ENCODE measurements at regions of chr1 and their contacts with region 1.

Region 1: DNA sequence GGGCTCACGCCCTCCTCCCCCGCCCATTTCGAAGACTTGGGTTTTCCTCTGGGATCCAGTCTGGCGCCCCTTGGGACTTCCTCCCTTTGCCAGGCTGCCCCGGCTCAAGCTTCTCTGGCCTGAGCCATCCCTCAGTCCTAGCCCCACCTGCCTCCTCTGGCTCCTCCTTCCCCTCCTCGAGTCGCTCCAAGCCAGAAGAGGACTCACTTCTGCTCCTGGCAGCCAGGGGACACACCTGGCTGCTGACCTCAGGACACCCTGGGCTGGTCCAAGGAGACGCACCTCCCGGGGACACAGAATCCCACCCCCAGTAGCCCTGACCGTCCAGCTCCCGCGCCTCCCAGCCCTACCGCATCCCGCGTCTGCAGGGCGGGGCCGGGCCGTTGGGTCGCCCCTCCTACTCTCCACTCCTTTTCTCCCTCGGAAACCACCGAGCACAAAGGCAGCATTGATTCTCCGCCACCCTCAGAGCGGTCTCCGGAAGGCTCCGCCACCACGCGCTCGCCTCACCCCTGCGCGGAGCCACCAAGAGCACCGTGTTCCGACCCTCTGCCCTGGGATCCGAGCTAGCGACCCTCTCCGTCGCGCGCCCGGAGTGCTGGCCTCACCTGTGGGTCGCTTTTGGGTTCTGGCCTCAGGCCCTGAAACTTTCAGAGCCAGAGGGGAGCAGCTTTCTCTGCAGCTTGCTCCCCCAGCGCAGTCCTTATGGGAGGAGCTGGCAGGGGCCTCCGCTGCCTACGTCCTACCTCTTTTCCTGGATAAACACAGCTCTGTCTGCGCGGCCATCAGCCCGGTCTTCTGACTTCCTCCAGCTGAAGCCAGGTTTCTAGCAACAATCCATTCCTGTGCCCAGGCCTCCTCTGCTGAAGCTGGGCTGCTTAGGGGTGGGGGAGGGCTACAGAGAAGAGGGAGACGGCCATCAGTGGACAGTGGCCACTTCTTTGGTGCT is at the start of gene C2CD4D:
- DNase-seq: peak; percentile 42 to 77 (median 66)
- ATAC-seq: peak; percentile 89
- H3K4me3 ChIP-seq: peak within 1 kb of the TSS; percentile 68
- H3K4me3 Mint-ChIP-seq: peak within 1 kb of the TSS; percentile 68 to 89 (median 82)
- H3K27ac ChIP-seq: peak within 1 kb of the TSS; percentile 55
- H3K27ac Mint-ChIP-seq: peak within 1 kb of the TSS; percentile 31 to 87 (median 77)
- H3K4me1 ChIP-seq: peaks cover 27 to 38% of the 10 kb centered on the region in 2 donors
- H3K4me1 Mint-ChIP-seq: peaks cover 33 to 53% (median 40%) of the 10 kb centered on the region in 7 donors
- H3K27me3 ChIP-seq: no peaks in the 10 kb centered on the region
- H3K27me3 Mint-ChIP-seq: peaks cover 0 to 8% (median 0%) of the 10 kb centered on the region in 5 donors
- total RNA-seq, gene C2CD4D: 0.34 to 0.87 TPM in 2 of 5 experiments, not detected in the others

Region 2: DNA sequence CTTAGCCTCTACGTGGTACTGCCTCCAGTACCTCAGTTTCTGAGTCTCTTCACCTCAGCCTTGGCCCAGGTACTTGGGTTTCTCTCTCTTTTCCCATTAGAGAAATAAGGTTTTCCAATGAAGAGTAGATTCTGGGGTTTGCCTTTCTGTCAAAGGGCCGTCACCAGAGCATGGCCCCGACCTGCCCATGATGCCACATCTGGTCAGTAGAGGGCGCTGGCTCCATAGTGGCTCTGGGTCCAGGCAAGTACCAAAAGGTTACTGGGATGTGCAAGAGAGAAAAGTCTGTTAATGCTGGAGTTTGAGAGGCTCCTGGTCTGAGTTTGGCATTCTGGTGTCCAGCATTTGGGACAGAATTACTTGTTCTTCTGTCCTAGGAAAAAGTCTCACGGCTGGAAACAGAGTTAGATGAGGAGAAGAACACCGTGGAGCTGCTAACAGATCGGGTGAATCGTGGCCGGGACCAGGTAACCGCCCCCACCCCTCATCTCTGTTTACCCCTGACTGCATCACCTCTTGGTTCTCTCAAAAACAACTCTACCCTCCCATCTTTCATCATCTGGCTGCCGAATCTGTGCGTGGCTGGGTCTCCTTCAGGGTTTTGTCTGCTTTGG is 305.0 kb before region 1 on chr1:
- CTCF ChIA-PET with region 1: no interaction called
- POLR2A ChIA-PET with region 1: no interaction called
- intact Hi-C with region 1: loop called in 1 of 2 experiments (anchors 2 kb)
- DNase-seq: peak; percentile 28 to 78 (median 59)
- ATAC-seq: peak; percentile 88
- H3K4me3 ChIP-seq: no peak overlapping the region
- H3K4me3 Mint-ChIP-seq: no peak overlapping the region
- H3K27ac ChIP-seq: no peak overlapping the region
- H3K27ac Mint-ChIP-seq: peak overlapping the region in 1 of 9 donors; percentile 67
- H3K4me1 ChIP-seq: peaks cover 6% of the 10 kb centered on the region in 2 donors
- H3K4me1 Mint-ChIP-seq: peaks cover 0 to 8% (median 3%) of the 10 kb centered on the region in 7 donors
- H3K27me3 ChIP-seq: no peaks in the 10 kb centered on the region
- H3K27me3 Mint-ChIP-seq: peaks cover 0 to 4% (median 0%) of the 10 kb centered on the region in 5 donors

Region 3: DNA sequence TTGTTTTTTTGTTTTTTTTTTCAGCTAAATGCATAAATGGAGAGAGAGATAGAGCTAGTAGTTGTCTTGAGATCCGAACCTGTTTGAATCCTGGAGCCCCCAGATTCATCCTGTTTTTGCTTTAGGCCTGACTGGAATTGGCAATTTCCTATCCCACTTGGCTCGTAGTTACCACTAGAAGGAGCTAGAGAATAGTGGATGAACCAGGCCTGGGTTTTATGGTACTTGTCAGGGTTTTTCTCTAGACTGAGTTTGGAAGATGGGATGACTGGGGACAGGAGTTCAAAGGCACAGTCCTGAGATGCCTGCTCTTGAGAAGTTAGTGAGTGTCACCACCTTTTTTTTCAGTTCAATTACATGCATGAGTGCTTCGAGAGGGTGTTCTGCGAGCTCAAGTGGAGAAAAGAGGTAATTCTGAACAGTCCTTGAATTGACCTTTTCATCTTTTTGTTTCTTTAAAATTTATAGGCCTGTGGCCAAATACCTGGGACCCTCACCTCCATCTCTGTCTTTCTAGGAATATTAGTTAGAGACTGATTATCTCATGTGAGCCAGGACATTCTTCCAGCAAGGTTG is 146.6 kb before region 1 on chr1:
- CTCF ChIA-PET with region 1: interaction called, 3 read pairs
- POLR2A ChIA-PET with region 1: no interaction called
- intact Hi-C with region 1: loop called (anchors 1 to 2 kb)
- DNase-seq: no peak
- ATAC-seq: no peak
- H3K4me3 ChIP-seq: no peak overlapping the region
- H3K4me3 Mint-ChIP-seq: no peak overlapping the region
- H3K27ac ChIP-seq: no peak overlapping the region
- H3K27ac Mint-ChIP-seq: peak overlapping the region in 1 of 9 donors; percentile 17
- H3K4me1 ChIP-seq: no peaks in the 10 kb centered on the region
- H3K4me1 Mint-ChIP-seq: peaks cover 0 to 9% (median 0%) of the 10 kb centered on the region in 7 donors
- H3K27me3 ChIP-seq: no peaks in the 10 kb centered on the region
- H3K27me3 Mint-ChIP-seq: no peaks in the 10 kb centered on the region

Region 4: DNA sequence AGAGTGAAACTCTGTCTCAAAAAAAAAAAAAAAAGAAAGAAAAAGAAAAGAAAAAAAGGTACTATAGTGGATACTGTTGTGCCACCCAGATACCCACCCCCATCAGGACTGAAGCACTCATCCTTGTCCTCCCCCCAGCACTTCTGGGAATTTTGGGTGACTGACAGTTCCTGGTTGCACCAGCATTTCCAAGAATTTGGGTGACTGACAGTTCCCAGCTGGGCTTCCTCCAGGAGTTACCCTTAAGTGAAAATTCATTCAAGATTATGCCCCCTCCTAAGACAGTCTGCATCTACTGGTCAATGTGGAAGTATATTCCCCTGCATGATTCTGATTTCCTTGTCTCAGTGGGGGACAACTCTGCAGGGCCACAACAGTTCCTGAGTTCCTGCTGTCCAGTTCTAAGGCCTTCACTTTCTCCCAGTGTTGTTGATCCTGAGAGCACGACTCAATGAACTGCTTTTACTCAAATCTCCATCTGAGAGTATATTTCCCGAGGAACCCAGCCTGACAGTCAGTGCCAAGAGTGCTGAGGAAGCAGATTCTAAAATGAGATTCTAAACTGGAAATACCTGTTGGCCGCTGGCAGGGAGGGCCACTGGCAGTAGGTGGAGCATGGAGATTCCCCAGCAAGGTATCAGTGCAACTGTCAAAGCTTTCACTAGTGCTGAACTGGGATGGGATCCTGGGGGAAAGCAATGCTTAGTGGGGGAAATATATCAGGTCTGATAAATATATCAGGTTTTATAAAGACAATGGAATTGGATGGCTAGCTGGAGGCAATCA is 99.9 kb before region 1 on chr1:
- CTCF ChIA-PET with region 1: interaction called, 6 read pairs
- POLR2A ChIA-PET with region 1: no interaction called
- intact Hi-C with region 1: loop called (anchors 1 kb)
- DNase-seq: no peak
- ATAC-seq: no peak
- H3K4me3 ChIP-seq: no peak overlapping the region
- H3K4me3 Mint-ChIP-seq: no peak overlapping the region
- H3K27ac ChIP-seq: no peak overlapping the region
- H3K27ac Mint-ChIP-seq: no peak overlapping the region
- H3K4me1 ChIP-seq: no peaks in the 10 kb centered on the region
- H3K4me1 Mint-ChIP-seq: peaks cover 0 to 10% (median 0%) of the 10 kb centered on the region in 7 donors
- H3K27me3 ChIP-seq: no peaks in the 10 kb centered on the region
- H3K27me3 Mint-ChIP-seq: peaks cover 0 to 25% (median 0%) of the 10 kb centered on the region in 5 donors

Region 5: DNA sequence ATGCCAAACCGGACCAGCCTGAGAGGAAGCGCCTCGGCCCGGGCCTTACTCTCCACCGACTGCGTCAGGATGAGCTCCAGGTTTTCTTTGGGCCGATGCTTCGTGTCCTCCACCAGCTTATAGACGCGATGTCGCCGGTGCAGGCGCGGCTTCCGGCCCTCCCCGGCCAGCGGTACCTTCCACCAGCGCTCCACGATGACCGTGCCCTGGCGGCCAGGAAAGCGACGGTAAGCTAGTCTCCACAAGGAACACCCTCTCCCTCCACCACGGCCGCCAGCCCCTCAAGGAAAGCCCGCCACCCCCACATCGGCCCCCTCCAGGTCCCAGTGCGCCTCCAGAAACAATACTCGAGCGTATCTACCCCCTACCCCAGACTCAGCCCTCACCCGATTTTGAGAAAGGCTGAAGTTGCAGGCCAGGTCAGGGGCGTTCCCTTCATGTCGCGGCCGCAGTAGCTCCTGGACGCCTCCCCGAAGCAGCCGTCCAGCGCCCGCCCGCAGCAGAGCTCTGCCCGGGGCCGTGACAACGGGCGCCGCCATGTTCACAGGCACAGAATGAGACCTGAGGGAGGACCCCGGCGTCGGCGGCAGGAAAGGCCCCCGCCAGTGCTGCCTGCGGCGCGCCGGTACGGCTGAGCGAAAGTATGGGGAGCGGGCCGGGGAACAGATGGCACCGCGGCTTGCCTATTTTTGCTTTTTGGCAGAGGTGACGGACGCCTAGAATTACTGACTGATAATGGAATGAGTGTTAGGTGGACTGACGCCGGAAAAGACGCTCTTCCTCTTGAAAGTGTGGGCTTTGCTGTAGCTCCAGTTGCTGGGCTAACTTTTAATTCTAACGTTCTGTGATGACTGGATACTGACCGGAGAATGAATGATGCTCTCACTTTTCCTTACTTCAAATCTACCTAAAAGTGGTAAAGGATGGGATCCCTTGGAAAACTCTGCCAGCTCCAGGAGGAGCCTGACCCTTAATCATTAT is 76.5 kb before region 1 on chr1 and contains the start of gene MRPL9:
- CTCF ChIA-PET with region 1: no interaction called
- POLR2A ChIA-PET with region 1: no interaction called
- intact Hi-C with region 1: loop called (anchors 2 kb)
- DNase-seq: peak; percentile 73 to 85 (median 82)
- ATAC-seq: peak; percentile 99
- H3K4me3 ChIP-seq: peak within 1 kb of the TSS; percentile 76
- H3K4me3 Mint-ChIP-seq: peak within 1 kb of the TSS; percentile 91 to 98 (median 95)
- H3K27ac ChIP-seq: peak within 1 kb of the TSS; percentile 81
- H3K27ac Mint-ChIP-seq: peak within 1 kb of the TSS; percentile 92 to 100 (median 97)
- H3K4me1 ChIP-seq: peaks cover 11 to 12% of the 10 kb centered on the region in 2 donors
- H3K4me1 Mint-ChIP-seq: peaks cover 13 to 28% (median 21%) of the 10 kb centered on the region in 7 donors
- H3K27me3 ChIP-seq: no peaks in the 10 kb centered on the region
- H3K27me3 Mint-ChIP-seq: no peaks in the 10 kb centered on the region
- total RNA-seq, gene MRPL9: 77.0 to 133 (median 81.5) TPM